PC-3 (cell line): ENCODE measurements at regions of chr18 and their contacts with region 1.

Region 1: DNA sequence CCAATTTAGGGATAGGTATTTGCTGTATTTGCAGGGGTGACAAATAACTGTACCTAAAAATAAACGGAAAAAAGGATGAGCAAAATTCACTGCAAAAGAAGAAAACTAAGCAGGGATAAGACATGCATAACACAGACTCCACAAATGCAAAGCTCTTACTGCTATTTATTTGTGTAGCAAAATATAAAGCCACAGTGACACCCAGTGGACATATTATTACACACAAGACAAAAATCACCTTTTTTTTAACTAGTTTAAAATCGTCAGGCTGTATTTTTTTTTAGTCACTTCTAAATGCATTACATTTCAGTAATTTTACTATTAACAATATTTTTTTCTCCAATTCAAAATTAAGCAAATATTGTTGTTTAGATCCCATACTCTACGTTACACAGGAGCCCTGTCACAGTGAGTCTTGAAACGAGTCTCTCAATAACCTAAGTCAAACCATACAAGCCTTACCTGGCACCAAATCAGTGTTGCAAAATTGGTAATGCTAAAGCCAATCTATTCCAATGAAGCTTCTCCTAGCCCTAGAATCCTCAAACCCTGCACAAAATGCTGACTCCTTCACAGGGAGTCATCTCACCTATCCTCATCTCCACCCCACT is 23.7 kb downstream of the METTL4 start:
- DNase-seq: peak; percentile 75
- ATAC-seq: peak; percentile 80
- H3K4me3 ChIP-seq: no peak overlapping the region
- H3K27ac ChIP-seq: no peak overlapping the region
- H3K4me1 ChIP-seq: no peaks in the 10 kb centered on the region
- H3K27me3 ChIP-seq: no peaks in the 10 kb centered on the region
- CTCF ChIP-seq: peak; percentile 80

Region 2: DNA sequence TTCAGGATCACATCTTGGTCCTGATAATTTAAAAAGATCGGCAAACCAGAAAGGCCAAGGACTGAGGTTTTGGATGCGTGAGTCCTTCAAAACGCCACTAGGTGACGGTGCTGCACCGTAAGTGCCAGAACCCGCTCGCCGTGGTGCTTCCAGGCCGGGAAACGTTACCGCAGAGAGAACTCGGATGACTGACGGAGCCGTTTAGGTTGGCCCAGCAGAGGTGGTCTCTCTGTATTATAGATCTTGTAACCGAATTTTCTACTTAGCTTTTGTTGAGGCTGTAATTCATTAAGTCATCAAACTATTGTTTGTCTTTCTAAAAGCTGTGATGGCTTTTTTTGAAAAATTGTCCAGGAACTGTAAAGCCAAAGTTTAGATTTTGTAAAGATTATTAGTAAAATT is 1682.7 kb before region 1 on chr18:
- CTCF ChIA-PET with region 1: no interaction called
- POLR2A ChIA-PET with region 1: no interaction called
- intact Hi-C with region 1: loop called (anchors 1 kb)
- DNase-seq: peak; percentile 86
- ATAC-seq: peak; percentile 99
- H3K4me3 ChIP-seq: no peak overlapping the region
- H3K27ac ChIP-seq: no peak overlapping the region
- H3K4me1 ChIP-seq: no peaks in the 10 kb centered on the region
- H3K27me3 ChIP-seq: peaks cover 24% of the 10 kb centered on the region; the same call in 1 of the 2 replicates
- CTCF ChIP-seq: peak; percentile 99

Region 3: DNA sequence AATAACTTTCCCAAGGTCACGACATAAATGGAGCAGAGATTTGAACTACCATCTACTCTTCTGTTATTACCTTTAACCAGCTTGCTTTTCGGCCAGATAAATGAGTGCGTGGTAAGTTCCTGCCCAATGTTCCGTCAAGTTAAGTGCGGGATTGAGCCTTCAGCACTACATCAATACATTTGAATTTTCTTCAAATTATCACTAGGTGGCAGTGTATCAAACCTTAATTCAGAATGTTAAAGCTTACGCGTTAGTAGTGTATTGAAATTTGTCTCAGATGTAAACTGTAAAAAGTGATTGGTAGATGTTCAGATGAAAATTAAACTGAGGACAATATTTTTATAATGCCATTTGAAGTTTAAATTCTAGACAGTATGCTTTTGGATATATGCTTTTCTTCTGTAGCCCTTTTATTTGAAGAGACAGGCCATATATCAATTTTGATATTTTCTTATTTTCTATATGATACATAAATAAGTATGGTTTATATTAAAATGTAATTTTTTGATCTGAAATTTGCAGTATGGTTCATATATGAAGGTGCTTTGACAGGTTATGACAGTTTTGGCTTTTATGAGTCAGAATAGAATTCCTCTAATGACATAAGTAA is 961.6 kb before region 1 on chr18:
- CTCF ChIA-PET with region 1: interaction called, 7 read pairs
- POLR2A ChIA-PET with region 1: no interaction called
- intact Hi-C with region 1: loop called (anchors 2 kb)
- DNase-seq: peak; percentile 69
- ATAC-seq: peak; percentile 78
- H3K4me3 ChIP-seq: no peak overlapping the region
- H3K27ac ChIP-seq: no peak overlapping the region
- H3K4me1 ChIP-seq: no peaks in the 10 kb centered on the region
- H3K27me3 ChIP-seq: peaks cover 73% of the 10 kb centered on the region
- CTCF ChIP-seq: peak; percentile 73

Region 4: GRCh38 chr18:1751243-1751642 is 796.3 kb before region 1 on chr18:
- CTCF ChIA-PET with region 1: no interaction called
- POLR2A ChIA-PET with region 1: no interaction called
- intact Hi-C with region 1: loop called (anchors 10 kb)
- DNase-seq: peak; percentile 24
- ATAC-seq: no peak
- H3K4me3 ChIP-seq: no peak overlapping the region
- H3K27ac ChIP-seq: no peak overlapping the region
- H3K4me1 ChIP-seq: no peaks in the 10 kb centered on the region
- H3K27me3 ChIP-seq: peaks cover 19% of the 10 kb centered on the region; the same call in 1 of the 2 replicates
- CTCF ChIP-seq: peak; percentile 55; the same call in 1 of the 2 replicates

Region 5: GRCh38 chr18:1914490-1914889 is 633.1 kb before region 1 on chr18:
- CTCF ChIA-PET with region 1: no interaction called
- POLR2A ChIA-PET with region 1: no interaction called
- intact Hi-C with region 1: loop called (anchors 2 kb)
- DNase-seq: peak; percentile 56
- ATAC-seq: peak; percentile 81
- H3K4me3 ChIP-seq: no peak overlapping the region
- H3K27ac ChIP-seq: no peak overlapping the region
- H3K4me1 ChIP-seq: no peaks in the 10 kb centered on the region
- H3K27me3 ChIP-seq: no peaks in the 10 kb centered on the region
- CTCF ChIP-seq: peak; percentile 76

Region 6: GRCh38 chr18:2104620-2105462 is 442.7 kb before region 1 on chr18:
- CTCF ChIA-PET with region 1: interaction called, 10 read pairs
- POLR2A ChIA-PET with region 1: no interaction called
- intact Hi-C with region 1: loop called (anchors 2 kb)
- DNase-seq: peak; percentile 64
- ATAC-seq: peak; percentile 94
- H3K4me3 ChIP-seq: no peak overlapping the region
- H3K27ac ChIP-seq: no peak overlapping the region
- H3K4me1 ChIP-seq: 0 out of 2 replicates have a peak, but pooled peaks cover 7% of the 10 kb centered on the region
- H3K27me3 ChIP-seq: no peaks in the 10 kb centered on the region
- CTCF ChIP-seq: peak; percentile 95

Region 7: DNA sequence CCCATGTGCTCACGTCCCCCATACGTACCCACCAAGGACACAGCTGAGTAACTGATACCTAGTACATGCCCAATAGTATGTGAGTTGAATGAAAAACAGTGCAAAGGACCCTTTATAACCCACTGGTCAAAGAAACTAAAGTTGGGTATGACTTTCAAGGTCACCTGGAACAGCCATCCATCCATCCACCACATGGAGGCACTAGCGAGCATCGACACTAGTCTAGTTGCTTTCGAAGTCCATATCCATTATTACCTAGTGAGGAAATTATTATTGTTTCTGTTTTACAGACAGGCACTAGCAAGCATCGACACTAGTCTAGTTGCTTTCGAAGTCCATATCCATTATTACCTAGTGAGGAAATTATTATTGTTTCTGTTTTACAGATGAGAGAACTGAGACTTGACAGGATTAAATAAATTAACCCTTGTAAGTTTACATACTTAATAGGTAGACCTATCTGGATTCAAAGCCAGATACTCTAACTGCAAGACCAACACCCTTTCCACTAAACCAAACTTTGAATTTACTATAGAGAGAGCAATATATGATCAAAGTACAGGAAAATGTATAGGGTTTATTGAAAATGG is 209.9 kb before region 1 on chr18:
- CTCF ChIA-PET with region 1: no interaction called
- POLR2A ChIA-PET with region 1: no interaction called
- intact Hi-C with region 1: loop called (anchors 1 kb)
- DNase-seq: peak; percentile 79
- ATAC-seq: peak; percentile 67; the same call in 1 of the 2 replicates
- H3K4me3 ChIP-seq: no peak overlapping the region
- H3K27ac ChIP-seq: no peak overlapping the region
- H3K4me1 ChIP-seq: no peaks in the 10 kb centered on the region
- H3K27me3 ChIP-seq: no peaks in the 10 kb centered on the region
- CTCF ChIP-seq: peak; percentile 80

Region 8: GRCh38 chr18:2903006-2903405 is 355.4 kb after region 1 on chr18:
- CTCF ChIA-PET with region 1: no interaction called
- POLR2A ChIA-PET with region 1: no interaction called
- intact Hi-C with region 1: no loop called
- DNase-seq: peak; percentile 68
- ATAC-seq: peak; percentile 20
- H3K4me3 ChIP-seq: no peak overlapping the region
- H3K27ac ChIP-seq: no peak overlapping the region
- H3K4me1 ChIP-seq: peaks cover 11% of the 10 kb centered on the region
- H3K27me3 ChIP-seq: 0 out of 2 replicates have a peak, but pooled peaks cover 3% of the 10 kb centered on the region
- CTCF ChIP-seq: no peak